Aorta (tissue), 5 donors: ENCODE measurements at regions of chr4 and their contacts with region 1.

Region 1: GRCh38 chr4:17347445-17347844 is 164.4 kb downstream of the QDPR start:
- DNase-seq: no peak
- ATAC-seq: peak; percentile 63
- H3K4me3 ChIP-seq: no peak overlapping the region
- H3K27ac ChIP-seq: no peak overlapping the region
- H3K4me1 ChIP-seq: no peaks in the 10 kb centered on the region
- H3K27me3 ChIP-seq: peaks cover 0 to 1% of the 10 kb centered on the region in 2 donors

Region 2: DNA sequence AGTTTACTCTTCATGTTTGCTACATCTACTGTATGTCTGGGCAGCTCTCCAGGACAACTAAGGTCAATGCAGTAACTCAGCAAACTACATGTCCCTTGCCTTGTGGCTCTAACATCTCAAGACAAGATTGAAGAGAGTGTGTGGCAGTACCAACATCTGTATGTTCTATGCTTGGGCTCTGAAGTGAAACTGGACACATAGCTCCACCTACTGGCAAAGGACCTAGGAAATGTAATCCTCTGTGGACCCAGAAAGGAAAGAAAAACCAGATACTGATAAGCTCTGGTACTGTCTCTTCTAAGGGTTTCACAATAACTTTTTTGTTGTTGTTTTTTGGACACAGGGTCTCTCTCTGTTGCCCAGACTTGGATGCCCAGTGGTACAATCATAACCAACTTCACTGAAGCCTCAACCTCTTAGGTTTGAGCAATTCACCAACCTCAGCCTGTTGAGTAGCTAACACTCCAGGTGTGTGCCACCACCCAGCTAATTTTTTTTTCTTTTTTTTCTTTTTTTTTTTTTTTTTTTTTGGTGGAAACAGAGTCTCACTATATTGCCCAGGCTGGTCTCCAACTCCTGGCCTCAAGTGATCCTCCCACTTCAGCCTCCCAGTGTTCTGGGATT is 100.3 kb after region 1 on chr4:
- intact Hi-C with region 1: loop called in 1 of 2 experiments (anchors 10 kb)
- DNase-seq: no peak
- ATAC-seq: peak; percentile 88
- H3K4me3 ChIP-seq: no peak overlapping the region
- H3K27ac ChIP-seq: no peak overlapping the region
- H3K4me1 ChIP-seq: no peaks in the 10 kb centered on the region
- H3K27me3 ChIP-seq: no peaks in the 10 kb centered on the region

Region 3: DNA sequence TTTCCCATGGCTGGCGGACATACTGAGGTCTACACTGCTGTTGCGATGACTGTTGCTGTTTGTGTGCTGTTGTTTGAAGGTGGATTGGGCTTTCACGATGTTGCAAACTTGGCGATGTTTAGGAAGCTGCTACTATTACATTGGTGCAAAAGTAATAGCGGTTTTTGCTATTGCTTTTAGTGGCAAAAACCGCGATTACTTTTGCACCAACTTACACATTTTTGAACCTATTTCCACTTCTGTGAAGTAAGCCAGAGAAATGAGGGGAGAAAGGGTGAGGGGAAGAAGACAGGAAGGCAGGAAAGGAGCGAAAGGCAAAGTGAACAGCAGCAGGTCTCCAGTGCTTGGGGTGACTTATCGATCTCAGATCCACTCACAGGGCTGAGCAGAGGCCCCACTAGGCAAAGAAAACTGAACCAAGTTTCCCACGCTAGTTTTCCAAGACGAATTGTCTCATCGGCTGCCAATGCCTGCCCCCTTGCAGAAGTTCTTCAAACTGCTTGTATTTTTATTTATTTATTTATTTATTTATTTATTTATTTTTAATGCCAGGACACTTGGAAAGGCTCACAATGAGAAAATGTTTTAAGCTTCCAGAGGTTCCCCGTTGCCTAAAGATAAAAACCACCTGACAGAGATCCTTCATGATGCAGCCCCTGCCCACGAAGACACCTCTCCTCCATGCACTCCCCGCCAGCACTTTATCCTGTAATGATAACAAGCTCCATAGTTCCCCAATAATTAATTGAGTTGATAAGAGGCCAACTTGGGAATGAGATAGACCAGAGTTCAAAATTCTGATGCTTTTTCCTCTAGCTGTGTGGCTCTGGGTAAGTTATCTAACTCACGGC is 121.2 kb after region 1 on chr4:
- intact Hi-C with region 1: loop called in 1 of 2 experiments (anchors 5 kb)
- DNase-seq: no peak
- ATAC-seq: no peak
- H3K4me3 ChIP-seq: no peak overlapping the region
- H3K27ac ChIP-seq: no peak overlapping the region
- H3K4me1 ChIP-seq: no peaks in the 10 kb centered on the region
- H3K27me3 ChIP-seq: no peaks in the 10 kb centered on the region